CD4-positive, alpha-beta T cell (primary cell): ENCODE measurements at regions of chr14 and their contacts with region 1.

Region 1: DNA sequence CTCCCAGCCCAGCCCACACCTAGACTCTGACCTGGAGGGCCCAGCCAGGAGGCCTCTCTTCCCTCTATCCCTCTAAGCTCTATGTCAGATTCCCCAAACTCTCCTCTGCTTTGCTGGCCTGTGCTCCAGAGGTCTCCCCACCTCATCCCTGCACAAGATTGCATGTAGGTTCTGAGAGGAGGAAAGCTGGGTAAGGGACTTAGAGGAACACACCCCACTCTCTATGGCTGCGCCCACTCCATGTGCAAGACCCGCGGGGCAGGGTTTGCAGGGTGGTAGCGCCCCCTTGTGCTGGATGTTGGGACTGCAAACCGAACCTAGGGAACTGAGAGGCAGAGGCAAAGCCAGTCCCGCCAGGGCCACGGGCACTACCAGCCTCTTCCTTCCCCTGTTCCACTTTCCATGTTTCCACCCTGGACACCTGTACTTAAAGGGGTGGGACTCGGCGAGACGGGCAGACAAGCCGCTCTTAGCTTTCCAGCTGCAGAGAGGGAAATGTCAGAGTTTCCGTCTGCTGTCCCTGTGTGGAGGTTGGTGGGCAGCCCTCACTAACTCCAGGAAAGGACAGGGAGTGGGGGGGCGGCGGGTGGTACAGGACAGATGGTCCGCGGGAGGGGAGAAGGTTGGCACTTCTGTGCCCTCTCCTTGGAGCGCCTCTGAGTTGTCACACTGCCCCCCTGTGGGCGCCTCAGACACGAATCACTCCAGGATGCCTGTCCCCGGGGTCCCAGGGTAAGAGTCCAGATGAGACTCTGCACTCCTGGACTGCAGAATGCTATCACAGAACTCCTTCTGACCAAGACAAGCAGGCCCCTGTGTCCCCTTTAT is 16.8 kb downstream of the MMP14 start:
- DNase-seq: peak; percentile 81 to 96 (median 90)
- ATAC-seq: peak; percentile 91
- H3K4me3 ChIP-seq: peak overlapping the region; percentile 69
- H3K4me3 Mint-ChIP-seq: peak overlapping the region; percentile 83
- H3K27ac ChIP-seq: no peak overlapping the region
- H3K27ac Mint-ChIP-seq: peak overlapping the region; percentile 61
- H3K4me1 ChIP-seq: peaks cover 18% of the 10 kb centered on the region
- H3K4me1 Mint-ChIP-seq: peaks cover 27% of the 10 kb centered on the region
- H3K27me3 ChIP-seq: no peaks in the 10 kb centered on the region
- H3K27me3 Mint-ChIP-seq: peaks cover 5% of the 10 kb centered on the region
- CTCF ChIP-seq: peak; percentile 99

Region 2: DNA sequence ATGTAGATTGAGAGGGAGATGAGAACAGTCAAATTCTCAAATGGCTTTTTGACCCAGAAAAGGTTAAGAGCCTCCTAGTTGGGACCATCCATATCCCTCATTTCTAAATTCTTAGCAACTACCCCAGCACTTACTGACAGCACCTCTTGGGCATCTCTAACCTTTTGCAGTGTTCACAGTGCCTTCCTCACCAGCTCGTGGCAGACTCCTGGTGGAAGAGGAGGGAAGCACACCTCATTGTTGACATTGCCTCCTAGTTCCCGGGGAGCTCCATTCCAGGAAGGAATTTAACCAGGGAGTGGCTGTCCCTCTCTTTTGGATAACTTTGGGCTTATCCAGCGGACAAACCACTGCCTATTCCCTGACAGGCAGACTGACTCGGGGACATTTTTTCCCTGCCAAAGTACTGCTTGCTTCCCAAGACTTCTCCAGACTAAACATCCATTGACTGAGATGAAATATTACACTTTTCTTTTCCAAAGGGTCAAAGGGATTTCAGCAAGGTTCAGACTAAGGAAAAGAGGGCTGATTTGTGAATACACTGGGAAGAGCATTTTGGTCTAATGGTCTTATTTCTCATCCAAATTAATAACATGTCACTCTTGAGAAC is 200.0 kb before region 1 on chr14:
- CTCF ChIA-PET with region 1: no interaction called
- POLR2A ChIA-PET with region 1: no interaction called
- intact Hi-C with region 1: loop called in 1 of 2 experiments (anchors 5 kb)
- DNase-seq: peak; percentile 20 to 75 (median 37)
- ATAC-seq: peak; percentile 90
- H3K4me3 ChIP-seq: no peak overlapping the region
- H3K4me3 Mint-ChIP-seq: no peak overlapping the region
- H3K27ac ChIP-seq: no peak overlapping the region
- H3K27ac Mint-ChIP-seq: no peak overlapping the region
- H3K4me1 ChIP-seq: no peaks in the 10 kb centered on the region
- H3K4me1 Mint-ChIP-seq: no peaks in the 10 kb centered on the region
- H3K27me3 ChIP-seq: no peaks in the 10 kb centered on the region
- H3K27me3 Mint-ChIP-seq: no peaks in the 10 kb centered on the region
- CTCF ChIP-seq: peak; percentile 69

Region 3: GRCh38 chr14:22822571-22823098 is 30.5 kb before region 1 on chr14:
- CTCF ChIA-PET with region 1: interaction called, 67 read pairs
- POLR2A ChIA-PET with region 1: interaction called, 12 read pairs
- intact Hi-C with region 1: loop called (anchors 1 kb)
- DNase-seq: peak; percentile 46 to 85 (median 64)
- ATAC-seq: peak; percentile 84
- H3K4me3 ChIP-seq: peak overlapping the region; percentile 44
- H3K4me3 Mint-ChIP-seq: peak overlapping the region; percentile 2
- H3K27ac ChIP-seq: no peak overlapping the region
- H3K27ac Mint-ChIP-seq: no peak overlapping the region
- H3K4me1 ChIP-seq: peaks cover 18% of the 10 kb centered on the region
- H3K4me1 Mint-ChIP-seq: peaks cover 23% of the 10 kb centered on the region
- H3K27me3 ChIP-seq: peaks cover 0 to 5% of the 10 kb centered on the region in 2 experiments
- H3K27me3 Mint-ChIP-seq: peaks cover 10% of the 10 kb centered on the region
- CTCF ChIP-seq: peak; percentile 83

Region 4: DNA sequence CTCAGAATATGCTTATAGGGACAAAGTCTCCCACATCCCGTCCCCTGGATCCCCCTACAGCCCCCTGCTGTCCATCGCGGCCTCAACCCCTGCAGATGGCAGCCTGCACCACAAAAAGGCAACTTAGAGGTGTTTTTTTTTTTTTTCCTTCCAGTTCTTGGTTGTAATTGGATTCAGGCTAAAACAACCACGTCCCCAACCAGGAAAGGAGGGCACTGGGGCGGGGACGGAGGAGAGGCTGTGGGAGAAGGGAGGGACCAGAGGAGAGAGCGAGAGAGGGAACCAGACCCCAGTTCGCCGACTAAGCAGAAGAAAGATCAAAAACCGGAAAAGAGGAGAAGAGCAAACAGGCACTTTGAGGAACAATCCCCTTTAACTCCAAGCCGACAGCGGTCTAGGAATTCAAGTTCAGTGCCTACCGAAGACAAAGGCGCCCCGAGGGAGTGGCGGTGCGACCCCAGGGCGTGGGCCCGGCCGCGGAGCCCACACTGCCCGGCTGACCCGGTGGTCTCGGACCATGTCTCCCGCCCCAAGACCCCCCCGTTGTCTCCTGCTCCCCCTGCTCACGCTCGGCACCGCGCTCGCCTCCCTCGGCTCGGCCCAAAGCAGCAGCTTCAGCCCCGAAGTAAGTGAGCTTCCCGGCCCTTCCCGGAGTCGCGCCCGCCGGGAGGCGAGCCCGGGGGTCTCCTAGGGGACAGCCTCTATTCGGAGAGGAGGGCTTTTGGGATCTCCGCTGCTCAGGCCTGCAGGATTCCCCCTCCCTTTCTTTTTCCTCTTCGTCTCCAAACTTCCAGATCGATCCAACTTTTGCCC is 16.6 kb before region 1 on chr14 and contains the start of gene MMP14:
- CTCF ChIA-PET with region 1: interaction called, 4 read pairs
- POLR2A ChIA-PET with region 1: interaction called, 11 read pairs
- intact Hi-C with region 1: no loop called
- DNase-seq: no peak
- ATAC-seq: no peak
- H3K4me3 ChIP-seq: peak within 1 kb of the TSS; percentile 54
- H3K4me3 Mint-ChIP-seq: peak within 1 kb of the TSS; percentile 89
- H3K27ac ChIP-seq: no peak within 1 kb of the TSS
- H3K27ac Mint-ChIP-seq: peak within 1 kb of the TSS; percentile 38
- H3K4me1 ChIP-seq: peaks cover 21% of the 10 kb centered on the region
- H3K4me1 Mint-ChIP-seq: peaks cover 18% of the 10 kb centered on the region
- H3K27me3 ChIP-seq: peaks cover 23 to 24% of the 10 kb centered on the region in 2 experiments
- H3K27me3 Mint-ChIP-seq: peaks cover 25% of the 10 kb centered on the region
- CTCF ChIP-seq: no peak
- total RNA-seq, gene MMP14: 2.6 to 2.9 TPM